Upper lobe of right lung (tissue), 1 donor: ENCODE measurements at regions of chr10 and their contacts with region 1.

Region 1: GRCh38 chr10:70461215-70461986 is 17.2 kb upstream of the PALD1 start:
- DNase-seq: no peak
- ATAC-seq: peak; percentile 72
- H3K4me3 ChIP-seq: no peak overlapping the region
- H3K27ac ChIP-seq: no peak overlapping the region
- H3K4me1 ChIP-seq: peaks cover 18% of the 10 kb centered on the region
- H3K27me3 ChIP-seq: peaks cover 7% of the 10 kb centered on the region
- CTCF ChIP-seq: peak; percentile 86

Region 2: DNA sequence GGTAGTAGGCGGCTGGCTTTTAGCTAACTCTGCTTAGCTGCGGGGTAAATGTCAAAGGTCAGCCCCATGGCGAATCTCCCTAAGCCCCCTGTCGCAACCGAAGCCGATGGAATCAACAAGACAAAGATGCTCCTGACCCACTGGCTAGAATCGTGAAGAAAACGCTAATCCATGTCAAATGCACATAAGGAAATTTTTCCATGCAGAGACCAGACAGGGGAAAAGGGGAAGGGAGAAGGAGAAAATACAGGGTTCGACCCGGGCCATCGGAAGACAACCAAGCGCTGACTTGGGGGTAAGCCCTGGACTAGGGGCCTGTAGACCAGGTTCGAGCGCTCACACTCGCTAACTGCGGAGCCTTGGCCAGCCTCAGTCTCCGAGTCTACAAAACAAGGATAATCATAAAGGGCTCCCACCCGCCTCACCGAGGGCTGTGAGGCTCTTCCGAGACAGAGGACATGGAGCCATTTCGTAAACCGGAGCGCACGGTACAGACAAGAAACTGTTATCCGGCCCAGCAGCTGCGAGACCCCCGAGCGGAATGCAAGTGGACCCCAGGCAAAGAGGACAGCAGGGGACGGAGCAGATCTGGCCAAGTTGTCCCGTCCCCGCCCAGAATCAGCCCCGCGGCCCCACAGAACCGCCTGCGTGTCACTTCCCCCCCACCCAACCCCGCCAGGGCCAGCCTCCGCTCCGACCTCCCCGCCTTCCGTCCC is 291.6 kb before region 1 on chr10:
- intact Hi-C with region 1: no loop called
- DNase-seq: no peak
- ATAC-seq: peak; percentile 47
- H3K4me3 ChIP-seq: peak overlapping the region; percentile 93
- H3K27ac ChIP-seq: peak overlapping the region; percentile 94
- H3K4me1 ChIP-seq: peaks cover 50% of the 10 kb centered on the region
- H3K27me3 ChIP-seq: no peaks in the 10 kb centered on the region
- CTCF ChIP-seq: no peak

Region 3: DNA sequence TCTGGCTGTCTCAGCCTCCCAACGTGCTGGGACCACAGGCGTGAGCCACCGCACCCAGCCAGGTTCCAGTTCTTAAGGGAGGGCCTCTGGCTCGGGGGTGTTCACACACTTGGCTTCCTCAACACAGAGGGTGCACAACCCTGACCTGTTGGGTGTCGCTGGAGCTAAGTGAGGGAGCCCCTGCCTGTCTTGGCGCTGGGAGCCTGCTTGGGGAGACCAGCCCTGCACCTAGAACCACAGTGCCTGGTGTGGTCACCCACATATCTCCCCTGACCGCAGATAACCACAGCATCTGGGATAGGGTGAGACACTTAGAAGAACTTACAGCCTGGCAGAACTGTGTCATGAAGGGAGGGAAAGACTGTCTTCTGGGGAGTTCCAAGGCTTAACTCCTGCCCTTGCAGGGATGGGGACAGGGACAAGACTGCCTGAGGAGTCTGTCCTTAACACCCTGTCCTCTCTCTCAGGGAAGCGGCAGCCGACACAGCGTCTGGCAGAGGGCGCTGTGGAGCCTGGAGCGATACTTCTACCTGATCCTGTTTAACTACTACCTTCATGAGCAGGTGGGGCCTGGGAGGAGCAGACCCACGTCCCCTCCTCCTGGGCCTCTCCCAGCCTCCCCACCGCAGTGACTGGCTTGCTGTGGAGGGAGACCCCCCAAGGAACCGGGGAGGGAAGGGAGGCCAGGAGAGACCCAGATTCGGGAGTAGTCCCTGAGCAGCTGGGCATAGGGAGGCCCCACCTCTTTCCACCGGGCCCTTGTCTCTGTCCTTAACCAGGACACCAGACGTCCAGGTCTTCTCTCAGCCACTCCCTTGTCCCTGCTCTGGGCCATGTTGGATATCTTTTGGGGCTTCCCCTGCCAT is 76.2 kb after region 1 on chr10:
- intact Hi-C with region 1: loop called (anchors 5 kb)
- DNase-seq: no peak
- ATAC-seq: peak; percentile 20
- H3K4me3 ChIP-seq: no peak overlapping the region
- H3K27ac ChIP-seq: no peak overlapping the region
- H3K4me1 ChIP-seq: no peaks in the 10 kb centered on the region
- H3K27me3 ChIP-seq: no peaks in the 10 kb centered on the region
- CTCF ChIP-seq: peak; percentile 34